ENCODE measurements at regions of chr1 and their contacts with region 1.

Region 1: GRCh38 chr1:23539698-23540266 is 8.7 kb upstream of the E2F2 start:
- DNase-seq: peak; percentile 70 to 83
- ATAC-seq: peak; percentile 88 to 93
- H3K4me3 ChIP-seq: peak overlapping the region in 3 of 4 donors; percentile 17 to 39 (median 29)
- H3K27ac ChIP-seq: no peak overlapping the region
- H3K4me1 ChIP-seq: peaks cover 5 to 7% of the 10 kb centered on the region in 2 donors
- H3K27me3 ChIP-seq: no peaks in the 10 kb centered on the region
- CTCF ChIP-seq: peak; percentile 82 to 95 (median 93)
- POLR2A ChIP-seq: no peak

Region 2: DNA sequence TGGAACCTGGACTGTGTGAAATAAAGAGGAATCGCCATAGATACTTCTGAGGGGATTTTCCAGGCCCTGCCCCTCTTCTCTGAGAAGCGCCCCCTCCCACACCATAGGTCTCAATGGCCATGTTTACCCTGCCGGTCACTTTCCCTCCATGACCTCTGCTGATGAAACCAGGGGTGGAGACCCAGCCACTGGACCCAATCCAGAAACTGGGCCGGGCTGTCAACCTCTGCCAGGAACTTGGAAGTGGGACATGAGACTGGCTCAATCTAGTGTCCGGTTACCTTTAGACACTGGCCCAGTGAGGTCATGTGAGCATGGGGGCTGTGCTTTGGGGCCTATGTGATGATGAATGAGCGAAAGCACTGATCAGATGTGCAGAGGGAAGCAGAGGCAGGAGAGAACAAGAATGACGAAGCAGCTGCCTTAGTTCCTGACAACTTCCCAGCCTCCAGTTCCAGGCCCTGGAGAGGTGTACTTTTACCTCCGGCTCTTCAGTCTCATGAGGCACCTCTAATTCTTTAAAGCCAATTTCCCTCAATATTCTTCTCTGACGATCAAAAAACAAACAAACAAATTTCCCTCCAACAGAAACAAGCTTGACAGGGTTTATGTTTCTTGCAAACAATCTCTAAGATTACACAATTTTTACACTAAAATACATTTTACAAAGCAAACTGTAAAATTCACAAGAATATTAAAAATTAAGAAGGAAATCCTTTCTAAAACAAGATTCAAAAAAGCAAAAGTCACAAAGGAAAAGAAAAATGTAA is 60.7 kb before region 1 on chr1:
- in situ Hi-C with region 1: no loop called
- intact Hi-C with region 1: no loop called
- DNase-seq: peak; percentile 95 to 99
- ATAC-seq: peak; percentile 90 to 92
- H3K4me3 ChIP-seq: peak overlapping the region in 1 of 4 donors; percentile 14
- H3K27ac ChIP-seq: peak overlapping the region; percentile 88 to 97 (median 93)
- H3K4me1 ChIP-seq: peaks cover 66 to 78% of the 10 kb centered on the region in 2 donors
- H3K27me3 ChIP-seq: no peaks in the 10 kb centered on the region
- CTCF ChIP-seq: no peak
- POLR2A ChIP-seq: peak; percentile 79 to 85

Region 3: GRCh38 chr1:23489842-23490241 is 49.9 kb before region 1 on chr1:
- in situ Hi-C with region 1: loop called (anchors 5 kb)
- intact Hi-C with region 1: no loop called
- DNase-seq: no peak
- ATAC-seq: no peak
- H3K4me3 ChIP-seq: no peak overlapping the region
- H3K27ac ChIP-seq: no peak overlapping the region
- H3K4me1 ChIP-seq: peaks cover 0 to 4% of the 10 kb centered on the region in 2 donors
- H3K27me3 ChIP-seq: no peaks in the 10 kb centered on the region
- CTCF ChIP-seq: no peak
- POLR2A ChIP-seq: no peak

Region 4: GRCh38 chr1:23496490-23497181 is 43.1 kb before region 1 on chr1:
- in situ Hi-C with region 1: loop called (anchors 5 kb)
- intact Hi-C with region 1: loop called (anchors 1 kb)
- DNase-seq: no peak
- ATAC-seq: peak; percentile 13 to 17
- H3K4me3 ChIP-seq: no peak overlapping the region
- H3K27ac ChIP-seq: no peak overlapping the region
- H3K4me1 ChIP-seq: peaks cover 0 to 3% of the 10 kb centered on the region in 2 donors
- H3K27me3 ChIP-seq: no peaks in the 10 kb centered on the region
- CTCF ChIP-seq: no peak
- POLR2A ChIP-seq: no peak

Region 5: GRCh38 chr1:23634842-23635651 is 95.3 kb after region 1 on chr1:
- in situ Hi-C with region 1: no loop called
- intact Hi-C with region 1: loop called (anchors 1 kb)
- DNase-seq: peak in 1 of 2 donors; percentile 65
- ATAC-seq: peak; percentile 38 to 75
- H3K4me3 ChIP-seq: peak overlapping the region; percentile 23 to 54 (median 50)
- H3K27ac ChIP-seq: peak overlapping the region; percentile 56 to 75 (median 73)
- H3K4me1 ChIP-seq: peaks cover 22% of the 10 kb centered on the region in 2 donors
- H3K27me3 ChIP-seq: no peaks in the 10 kb centered on the region
- CTCF ChIP-seq: peak; percentile 67 to 90 (median 84)
- POLR2A ChIP-seq: no peak